Activated naive CD4-positive, alpha-beta T cell treated with anti-CD3 and anti-CD28 coated beads for 36 hours (primary cell): ENCODE measurements at regions of chr5 and their contacts with region 1.

Region 1: DNA sequence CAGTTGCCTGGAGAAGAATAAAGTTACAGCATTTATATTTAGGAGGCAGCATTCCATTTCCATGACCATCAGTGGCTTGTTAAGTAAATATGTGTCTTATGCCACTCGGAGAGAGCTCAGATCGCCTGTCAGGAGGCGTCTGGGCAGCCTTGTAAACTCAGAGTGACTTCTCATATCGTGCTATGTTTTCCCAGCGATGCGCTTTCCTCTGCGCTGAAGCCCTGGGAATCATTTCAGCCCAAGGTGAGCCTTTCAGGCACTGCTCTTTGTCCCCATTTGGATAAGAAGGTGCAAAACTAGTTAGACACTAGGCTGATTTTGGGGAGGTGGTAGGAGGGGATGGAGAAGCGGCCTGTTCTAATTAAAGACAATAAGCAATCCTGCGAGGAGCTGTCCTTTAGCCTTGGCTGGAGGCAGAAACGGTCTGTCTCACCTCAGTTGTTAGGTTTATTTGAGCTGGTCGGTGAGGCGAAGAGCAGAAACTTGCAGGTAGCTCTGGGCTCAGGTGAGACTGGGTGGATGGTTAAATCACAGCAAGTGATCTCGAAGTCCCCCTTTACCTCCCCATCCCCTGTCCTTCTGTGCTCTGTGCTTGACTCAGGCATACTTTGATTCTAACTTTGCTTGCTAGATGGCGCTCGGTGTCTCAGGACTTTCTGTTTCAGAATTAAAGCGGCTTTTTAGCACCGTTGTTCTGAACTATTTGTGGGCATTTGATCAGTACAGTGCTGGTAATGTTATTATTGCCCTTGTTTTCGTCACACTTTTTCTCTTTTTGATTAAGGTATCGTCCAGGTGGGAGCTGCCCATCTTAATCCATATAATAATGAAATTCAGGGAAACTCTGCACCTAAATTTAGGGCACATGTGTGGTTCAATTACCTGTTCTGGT is 24.6 kb downstream of the NR2F1 start:
- DNase-seq: peak; percentile 58
- H3K4me3 Mint-ChIP-seq: no peak overlapping the region
- H3K27ac Mint-ChIP-seq: no peak overlapping the region
- H3K4me1 Mint-ChIP-seq: peaks cover 6% of the 10 kb centered on the region
- H3K27me3 Mint-ChIP-seq: peaks cover 67% of the 10 kb centered on the region

Region 2: DNA sequence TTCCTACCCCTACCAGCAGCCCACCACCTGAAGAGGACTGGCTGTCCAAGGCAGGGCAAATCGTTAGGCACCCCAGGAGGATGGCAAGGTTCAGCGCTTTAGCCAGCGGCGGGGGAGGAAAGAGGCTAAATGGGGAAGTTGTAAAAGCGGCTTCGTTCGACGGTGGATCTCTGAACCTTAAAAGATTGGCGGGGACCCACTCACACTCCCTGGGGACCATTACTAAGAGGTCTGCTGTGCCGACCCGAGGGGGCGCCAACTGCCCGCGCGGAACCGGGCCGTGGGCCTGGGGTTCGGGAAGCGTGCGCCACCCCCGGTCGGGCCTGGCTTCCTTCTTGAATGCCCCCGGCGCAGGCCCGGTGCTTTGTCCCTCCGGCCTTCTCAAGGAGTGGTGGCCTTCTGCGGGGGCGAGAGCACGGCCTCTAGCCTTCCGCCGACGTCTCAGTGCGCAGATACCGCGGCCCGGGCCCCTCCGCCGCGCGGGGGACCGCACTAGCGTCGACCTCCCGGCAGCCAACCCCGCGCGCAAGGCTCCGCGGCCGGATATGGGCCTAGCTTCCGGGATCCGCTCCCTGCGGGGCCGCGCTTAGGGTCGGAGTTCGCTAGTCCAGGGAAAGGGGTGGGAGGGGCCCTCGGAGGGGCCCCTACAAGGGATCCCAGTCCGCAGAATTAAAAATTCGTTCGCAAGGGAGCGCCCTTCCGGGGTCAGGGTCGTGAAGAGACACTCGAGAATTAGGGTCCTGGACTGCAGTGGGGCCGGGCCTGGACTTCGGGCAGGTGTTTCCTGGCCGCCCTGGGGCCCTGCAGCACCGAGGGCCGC is 37.1 kb before region 1 on chr5:
- CTCF ChIA-PET with region 1: no interaction called
- intact Hi-C with region 1: loop called (anchors 2 kb)
- DNase-seq: no peak
- H3K4me3 Mint-ChIP-seq: peak overlapping the region; percentile 12
- H3K27ac Mint-ChIP-seq: no peak overlapping the region
- H3K4me1 Mint-ChIP-seq: peaks cover 23% of the 10 kb centered on the region
- H3K27me3 Mint-ChIP-seq: peaks cover 71% of the 10 kb centered on the region

Region 3: DNA sequence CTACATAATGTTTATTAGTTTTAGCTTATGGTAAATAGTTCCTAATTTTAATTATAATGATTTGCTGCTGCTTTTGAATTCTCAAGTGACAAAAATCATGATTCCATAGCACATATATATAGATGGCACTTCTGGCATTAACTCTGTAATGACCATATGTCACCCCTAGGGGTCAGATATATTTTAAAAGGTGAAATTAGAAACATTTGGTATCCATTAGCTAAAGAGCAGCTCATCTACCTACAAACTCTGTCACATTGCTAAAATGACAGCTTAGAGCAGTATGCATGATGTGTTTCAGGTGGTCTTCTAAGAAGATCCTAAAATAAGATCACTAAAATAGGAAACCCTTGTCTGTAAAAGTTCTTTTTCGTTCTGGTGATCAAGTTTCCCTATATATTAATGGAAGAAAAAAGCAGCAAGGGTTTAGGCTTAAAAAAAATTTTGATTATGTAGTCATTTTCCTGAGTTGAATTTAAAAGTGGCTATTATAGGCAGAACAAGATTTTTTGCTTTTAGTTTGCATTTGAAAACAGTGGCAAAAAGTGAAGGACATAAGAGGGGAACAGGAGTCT is 291.5 kb after region 1 on chr5:
- CTCF ChIA-PET with region 1: interaction called, 3 read pairs
- intact Hi-C with region 1: loop called (anchors 5 kb)
- DNase-seq: no peak
- H3K4me3 Mint-ChIP-seq: no peak overlapping the region
- H3K27ac Mint-ChIP-seq: no peak overlapping the region
- H3K4me1 Mint-ChIP-seq: no peaks in the 10 kb centered on the region
- H3K27me3 Mint-ChIP-seq: no peaks in the 10 kb centered on the region

Region 4: DNA sequence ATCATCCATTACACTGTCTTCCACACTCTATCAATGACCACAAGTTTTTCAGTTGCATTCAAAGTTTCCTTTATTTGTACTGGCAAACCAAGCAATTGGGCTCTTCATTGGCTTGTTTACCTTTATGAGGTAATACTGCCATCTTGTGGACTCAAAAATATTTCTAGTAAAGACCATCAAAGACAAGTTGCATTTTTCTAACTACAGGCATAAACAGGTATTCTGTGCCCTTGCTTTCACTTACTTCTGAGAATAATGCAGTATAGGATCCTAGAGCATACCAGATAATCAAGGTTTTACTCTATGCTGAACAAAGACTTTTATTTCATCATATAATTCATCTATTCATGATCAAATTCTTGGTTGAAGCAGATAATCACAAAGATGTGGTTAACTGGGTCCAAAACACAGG is 307.5 kb after region 1 on chr5:
- CTCF ChIA-PET with region 1: interaction called, 4 read pairs
- intact Hi-C with region 1: loop called (anchors 1 kb)
- DNase-seq: no peak
- H3K4me3 Mint-ChIP-seq: no peak overlapping the region
- H3K27ac Mint-ChIP-seq: no peak overlapping the region
- H3K4me1 Mint-ChIP-seq: no peaks in the 10 kb centered on the region
- H3K27me3 Mint-ChIP-seq: no peaks in the 10 kb centered on the region